Right cardiac atrium (tissue), 5 donors: ENCODE measurements at regions of chr11 and their contacts with region 1.

Region 1: GRCh38 chr11:102451681-102452460 is 694 bp downstream of the TMEM123 start:
- DNase-seq: peak; percentile 60 to 90 (median 87)
- ATAC-seq: peak; percentile 81 to 84
- H3K4me3 ChIP-seq: peak overlapping the region; percentile 63
- H3K27ac ChIP-seq: peak overlapping the region; percentile 74
- H3K4me1 ChIP-seq: no peaks in the 10 kb centered on the region
- H3K27me3 ChIP-seq: no peaks in the 10 kb centered on the region

Region 2: GRCh38 chr11:102384419-102385079 is 67.3 kb before region 1 on chr11:
- intact Hi-C with region 1: loop called in 1 of 4 experiments (anchors 10 kb)
- DNase-seq: peak; percentile 71 to 91 (median 90)
- ATAC-seq: peak; percentile 88 to 96
- H3K4me3 ChIP-seq: no peak overlapping the region
- H3K27ac ChIP-seq: peak overlapping the region; percentile 71
- H3K4me1 ChIP-seq: peaks cover 2% of the 10 kb centered on the region
- H3K27me3 ChIP-seq: no peaks in the 10 kb centered on the region

Region 3: GRCh38 chr11:102599642-102600261 is 147.9 kb after region 1 on chr11:
- intact Hi-C with region 1: no loop called
- DNase-seq: no peak
- ATAC-seq: peak in 1 of 2 donors; percentile 61
- H3K4me3 ChIP-seq: no peak overlapping the region
- H3K27ac ChIP-seq: no peak overlapping the region
- H3K4me1 ChIP-seq: peaks cover 2% of the 10 kb centered on the region
- H3K27me3 ChIP-seq: no peaks in the 10 kb centered on the region